SK-N-SH (cell line): ENCODE measurements at regions of chr2 and their contacts with region 1.

Region 1: GRCh38 chr2:38315707-38316333 is 61.3 kb downstream of the ATL2 start:
- DNase-seq: peak; percentile 67
- H3K4me3 ChIP-seq: no peak overlapping the region; a peak in 1 of 4 replicates
- H3K27ac ChIP-seq: no peak overlapping the region
- H3K4me1 ChIP-seq: no peaks in the 10 kb centered on the region; a peak in 1 of 4 replicates
- H3K27me3 ChIP-seq: no peaks in the 10 kb centered on the region
- CTCF ChIP-seq: peak; percentile 97
- EP300 ChIP-seq: no peak
- RAD21 ChIP-seq: peak; percentile 92

Region 2: GRCh38 chr2:38327580-38327979 is 11.8 kb after region 1 on chr2:
- CTCF ChIA-PET with region 1: interaction called, 41 read pairs
- POLR2A ChIA-PET with region 1: interaction called, 3 read pairs
- DNase-seq: no peak
- H3K4me3 ChIP-seq: no peak overlapping the region
- H3K27ac ChIP-seq: no peak overlapping the region
- H3K4me1 ChIP-seq: no peaks in the 10 kb centered on the region; a peak in 3 of 4 replicates
- H3K27me3 ChIP-seq: no peaks in the 10 kb centered on the region
- CTCF ChIP-seq: no peak
- EP300 ChIP-seq: no peak
- RAD21 ChIP-seq: no peak

Region 3: DNA sequence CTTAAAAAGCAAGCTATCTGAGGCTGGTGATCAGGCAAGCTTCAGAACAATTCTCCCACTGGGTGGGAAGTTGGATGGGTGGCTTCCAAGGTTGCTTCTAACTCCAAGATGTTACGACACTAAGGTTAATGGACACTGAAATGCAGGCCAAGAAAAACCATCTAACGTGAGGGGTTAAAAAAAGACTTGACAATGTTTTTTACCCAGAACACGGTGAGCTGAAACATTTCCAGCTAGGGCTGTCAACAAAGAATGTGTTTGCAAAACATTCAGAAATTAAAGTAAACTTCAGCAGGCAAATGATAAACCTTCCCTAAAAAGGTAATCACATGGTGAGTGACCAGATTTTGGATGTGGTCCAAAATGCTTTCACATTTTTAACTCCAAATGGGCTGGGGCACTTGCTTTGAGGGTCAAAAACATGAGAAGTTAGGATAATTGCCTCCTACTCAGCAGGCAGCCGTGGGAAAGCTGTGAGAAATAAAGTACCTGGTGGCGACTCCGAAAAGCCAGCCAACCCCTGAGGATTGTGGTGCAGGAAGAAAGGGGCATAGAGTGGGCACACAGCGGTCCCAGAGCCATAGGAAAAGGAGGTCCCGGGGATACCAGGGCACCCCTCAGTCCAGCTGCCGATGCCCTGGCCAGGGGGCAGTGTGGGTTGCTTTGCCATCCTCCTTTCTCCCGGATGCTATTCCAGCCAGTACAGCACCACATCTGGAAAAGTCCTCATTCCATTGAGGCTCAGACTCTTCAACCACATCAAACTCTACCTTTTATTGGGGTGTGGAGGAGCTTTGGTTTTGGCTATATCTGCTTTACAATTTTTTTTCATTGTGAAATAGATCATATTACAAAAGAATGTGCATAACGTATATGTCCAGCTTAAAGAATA is 151.3 kb after region 1 on chr2:
- CTCF ChIA-PET with region 1: interaction called, 16 read pairs
- POLR2A ChIA-PET with region 1: no interaction called
- DNase-seq: no peak
- H3K4me3 ChIP-seq: no peak overlapping the region
- H3K27ac ChIP-seq: no peak overlapping the region
- H3K4me1 ChIP-seq: peaks cover 0 to 13% of the 10 kb centered on the region in 2 experiments; a peak in 2 of 4 replicates
- H3K27me3 ChIP-seq: no peaks in the 10 kb centered on the region; the same call in 1 of the 2 replicates
- CTCF ChIP-seq: no peak
- EP300 ChIP-seq: no peak
- RAD21 ChIP-seq: no peak

Region 4: GRCh38 chr2:38514603-38515159 is 198.9 kb after region 1 on chr2:
- CTCF ChIA-PET with region 1: interaction called, 206 read pairs
- POLR2A ChIA-PET with region 1: no interaction called
- DNase-seq: no peak
- H3K4me3 ChIP-seq: no peak overlapping the region
- H3K27ac ChIP-seq: no peak overlapping the region
- H3K4me1 ChIP-seq: peaks cover 3 to 4% of the 10 kb centered on the region in 2 experiments; a peak in 2 of 4 replicates
- H3K27me3 ChIP-seq: no peaks in the 10 kb centered on the region
- CTCF ChIP-seq: no peak
- EP300 ChIP-seq: no peak
- RAD21 ChIP-seq: no peak

Region 5: DNA sequence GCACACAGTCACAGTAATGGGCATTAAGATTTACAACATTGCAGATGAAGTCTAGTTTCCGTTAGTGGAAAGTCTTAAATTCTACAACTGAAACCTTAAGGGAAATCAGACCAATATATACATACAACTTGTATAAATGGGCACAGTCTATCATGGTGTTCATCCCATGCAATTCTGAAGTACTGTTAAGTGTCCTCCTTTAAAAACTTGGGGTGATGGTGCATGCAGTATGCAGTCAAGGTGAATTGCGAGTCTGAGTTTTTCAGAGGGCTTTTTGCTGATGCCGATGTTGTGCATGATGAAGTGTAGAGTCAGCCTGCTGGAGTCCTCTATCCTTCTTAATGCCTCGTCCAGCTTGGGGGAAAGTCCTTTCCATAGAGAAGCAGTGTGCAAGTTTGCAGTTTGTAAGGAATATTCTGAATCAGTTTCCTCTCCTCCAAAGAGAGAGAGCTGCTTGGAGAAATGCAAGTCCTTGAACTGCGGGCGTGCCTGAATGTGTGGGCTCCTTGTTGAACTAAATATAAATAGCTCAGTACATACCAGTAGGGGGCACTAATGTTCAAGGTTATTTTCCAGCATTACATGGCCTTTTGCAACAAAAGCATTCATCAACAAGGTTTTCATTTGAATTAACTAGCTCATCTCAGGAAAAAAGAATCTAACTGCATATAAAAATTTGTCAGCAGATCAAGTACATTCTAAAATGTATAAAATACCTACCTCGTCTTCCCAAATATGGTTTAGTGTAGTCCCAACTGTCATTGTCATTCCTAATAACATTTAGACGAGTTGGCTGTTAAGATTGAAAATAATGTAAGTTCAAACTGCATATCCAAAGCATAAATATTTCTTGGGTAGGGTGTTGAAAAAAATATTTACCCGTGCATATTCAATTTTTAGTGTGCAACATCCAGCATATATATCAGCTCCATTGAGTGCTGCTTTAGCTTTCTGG is 265.6 kb after region 1 on chr2:
- CTCF ChIA-PET with region 1: interaction called, 31 read pairs
- POLR2A ChIA-PET with region 1: no interaction called
- DNase-seq: peak; percentile 44
- H3K4me3 ChIP-seq: no peak overlapping the region
- H3K27ac ChIP-seq: peak overlapping the region in 1 of 2 experiments; percentile 3; a peak in 1 of 4 replicates
- H3K4me1 ChIP-seq: peaks cover 0 to 13% of the 10 kb centered on the region in 2 experiments; a peak in 2 of 4 replicates
- H3K27me3 ChIP-seq: no peaks in the 10 kb centered on the region
- CTCF ChIP-seq: peak; percentile 89
- EP300 ChIP-seq: no peak
- RAD21 ChIP-seq: peak; percentile 89